PC-9 (cell line): ENCODE measurements at regions of chr6 and their contacts with region 1.

Region 1: DNA sequence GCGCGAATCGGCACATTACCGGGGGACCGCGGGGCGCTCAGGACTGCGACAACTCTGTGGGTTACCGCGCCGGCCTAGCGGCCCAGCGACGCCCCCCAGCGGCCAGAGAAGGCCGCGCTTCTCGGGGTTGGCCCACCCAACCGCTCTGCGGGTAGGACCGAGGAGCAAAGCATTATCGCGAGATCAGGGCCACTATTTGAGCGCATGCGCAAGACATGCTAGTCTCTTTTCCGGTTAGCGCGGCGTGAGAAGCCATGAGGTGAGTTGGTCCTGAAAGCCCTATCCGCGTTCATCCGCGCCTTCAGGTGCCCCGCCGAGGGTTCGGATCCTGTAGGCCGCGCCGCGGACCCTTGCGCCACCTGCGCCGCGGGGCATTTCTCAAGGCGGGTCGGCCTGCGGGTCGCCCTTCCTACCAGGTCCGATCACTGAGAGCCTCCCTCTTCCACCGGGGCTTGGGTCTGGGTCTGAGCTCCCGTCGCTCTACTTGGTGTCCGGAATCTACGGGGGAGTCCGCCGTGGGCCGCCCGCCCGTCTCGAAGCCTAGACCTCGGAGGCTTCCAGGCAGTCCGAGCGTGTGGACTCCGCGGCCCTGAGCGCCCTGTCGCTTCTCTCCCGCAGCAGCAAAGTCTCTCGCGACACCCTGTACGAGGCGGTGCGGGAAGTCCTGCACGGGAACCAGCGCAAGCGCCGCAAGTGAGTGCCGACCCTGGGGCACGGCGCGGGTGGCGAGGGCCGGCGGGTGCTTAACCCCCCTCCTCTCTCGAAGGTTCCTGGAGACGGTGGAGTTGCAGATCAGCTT is at the start of gene RPL10A:
- DNase-seq: peak; percentile 88 to 91
- H3K4me3 ChIP-seq: peak within 1 kb of the TSS; percentile 94
- H3K27ac ChIP-seq: peak within 1 kb of the TSS; percentile 96
- H3K4me1 ChIP-seq: peaks cover 28% of the 10 kb centered on the region
- H3K27me3 ChIP-seq: no peaks in the 10 kb centered on the region
- CTCF ChIP-seq: peak; percentile 93
- total RNA-seq, gene RPL10A: 1,335 and 1,742 TPM in 2 replicates

Region 2: GRCh38 chr6:35297601-35298481 is 170.5 kb before region 1 on chr6 and contains the start of gene DEF6:
- CTCF ChIA-PET with region 1: interaction called, 4 read pairs
- POLR2A ChIA-PET with region 1: interaction called, 5 read pairs
- intact Hi-C with region 1: loop called (anchors 1 kb)
- DNase-seq: peak; percentile 87
- H3K4me3 ChIP-seq: peak within 1 kb of the TSS; percentile 66
- H3K27ac ChIP-seq: no peak within 1 kb of the TSS
- H3K4me1 ChIP-seq: peaks cover 23% of the 10 kb centered on the region
- H3K27me3 ChIP-seq: no peaks in the 10 kb centered on the region
- CTCF ChIP-seq: peak; percentile 85
- total RNA-seq, gene DEF6: 19.6 and 27.0 TPM in 2 replicates

Region 3: DNA sequence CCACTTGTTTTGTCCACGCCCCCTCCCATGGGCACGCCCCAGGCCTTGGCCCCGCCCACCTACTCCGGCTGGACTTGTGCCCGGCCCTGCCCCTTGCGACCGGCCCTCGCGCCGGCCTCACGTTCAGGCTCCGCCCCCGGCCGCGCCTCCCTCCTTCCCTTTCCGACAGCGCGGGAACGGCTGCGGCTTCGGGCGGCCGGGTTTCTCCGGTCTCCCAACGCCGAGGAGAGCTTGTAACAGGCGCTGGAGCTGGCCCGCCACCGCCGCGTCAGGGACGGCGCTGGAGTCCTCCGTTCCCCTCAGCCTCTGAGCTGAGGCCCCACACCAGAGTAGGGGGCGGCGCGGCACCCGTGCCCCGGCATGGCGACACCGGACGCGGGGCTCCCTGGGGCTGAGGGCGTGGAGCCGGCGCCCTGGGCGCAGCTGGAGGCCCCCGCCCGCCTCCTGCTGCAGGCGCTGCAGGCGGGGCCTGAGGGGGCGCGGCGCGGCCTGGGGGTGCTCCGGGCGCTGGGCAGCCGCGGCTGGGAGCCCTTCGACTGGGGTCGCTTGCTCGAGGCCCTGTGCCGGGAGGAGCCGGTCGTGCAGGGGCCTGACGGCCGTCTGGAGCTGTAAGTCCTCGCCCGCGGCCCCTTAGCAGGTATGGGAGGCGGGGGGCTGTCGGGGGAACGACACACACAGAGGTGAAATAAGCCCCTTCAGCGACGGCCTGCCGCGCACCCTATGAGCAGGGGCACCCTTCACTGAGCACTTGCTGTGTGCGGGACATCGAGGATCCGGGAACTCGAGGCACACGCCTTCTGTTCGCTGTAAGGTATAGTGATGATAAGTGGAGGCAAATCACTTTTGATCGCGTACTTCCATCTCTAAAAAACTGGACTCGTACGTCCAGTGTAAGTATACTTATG is 15.9 kb before region 1 on chr6 and contains the start of gene FANCE:
- CTCF ChIA-PET with region 1: interaction called, 19 read pairs
- POLR2A ChIA-PET with region 1: interaction called, 4 read pairs
- intact Hi-C with region 1: loop called (anchors 1 kb)
- DNase-seq: peak; percentile 76 to 97
- H3K4me3 ChIP-seq: peak within 1 kb of the TSS; percentile 65
- H3K27ac ChIP-seq: no peak within 1 kb of the TSS
- H3K4me1 ChIP-seq: peaks cover 21% of the 10 kb centered on the region
- H3K27me3 ChIP-seq: no peaks in the 10 kb centered on the region
- CTCF ChIP-seq: no peak
- total RNA-seq, gene FANCE: 6.9 and 9.6 TPM in 2 replicates

Region 4: GRCh38 chr6:35489995-35490733 is 21.8 kb after region 1 on chr6:
- CTCF ChIA-PET with region 1: no interaction called
- POLR2A ChIA-PET with region 1: interaction called, 3 read pairs
- intact Hi-C with region 1: loop called (anchors 2 kb)
- DNase-seq: no peak
- H3K4me3 ChIP-seq: no peak overlapping the region
- H3K27ac ChIP-seq: no peak overlapping the region
- H3K4me1 ChIP-seq: peaks cover 67% of the 10 kb centered on the region
- H3K27me3 ChIP-seq: no peaks in the 10 kb centered on the region
- CTCF ChIP-seq: no peak

Region 5: GRCh38 chr6:35496841-35497570 is 28.6 kb after region 1 on chr6 and contains the start of gene TEAD3:
- CTCF ChIA-PET with region 1: interaction called, 11 read pairs
- POLR2A ChIA-PET with region 1: interaction called, 7 read pairs
- intact Hi-C with region 1: loop called (anchors 2 kb)
- DNase-seq: peak; percentile 51 to 91
- H3K4me3 ChIP-seq: peak within 1 kb of the TSS; percentile 94
- H3K27ac ChIP-seq: peak within 1 kb of the TSS; percentile 88
- H3K4me1 ChIP-seq: peaks cover 30% of the 10 kb centered on the region
- H3K27me3 ChIP-seq: no peaks in the 10 kb centered on the region
- CTCF ChIP-seq: no peak
- total RNA-seq, gene TEAD3: 33.1 and 40.1 TPM in 2 replicates

Region 6: GRCh38 chr6:35810971-35811497 is 342.7 kb after region 1 on chr6:
- CTCF ChIA-PET with region 1: no interaction called
- POLR2A ChIA-PET with region 1: no interaction called
- intact Hi-C with region 1: no loop called
- DNase-seq: peak; percentile 55 to 99
- H3K4me3 ChIP-seq: no peak overlapping the region; the same call in 1 of the 2 replicates
- H3K27ac ChIP-seq: peak overlapping the region; percentile 66
- H3K4me1 ChIP-seq: peaks cover 22% of the 10 kb centered on the region
- H3K27me3 ChIP-seq: no peaks in the 10 kb centered on the region
- CTCF ChIP-seq: no peak

Region 7: DNA sequence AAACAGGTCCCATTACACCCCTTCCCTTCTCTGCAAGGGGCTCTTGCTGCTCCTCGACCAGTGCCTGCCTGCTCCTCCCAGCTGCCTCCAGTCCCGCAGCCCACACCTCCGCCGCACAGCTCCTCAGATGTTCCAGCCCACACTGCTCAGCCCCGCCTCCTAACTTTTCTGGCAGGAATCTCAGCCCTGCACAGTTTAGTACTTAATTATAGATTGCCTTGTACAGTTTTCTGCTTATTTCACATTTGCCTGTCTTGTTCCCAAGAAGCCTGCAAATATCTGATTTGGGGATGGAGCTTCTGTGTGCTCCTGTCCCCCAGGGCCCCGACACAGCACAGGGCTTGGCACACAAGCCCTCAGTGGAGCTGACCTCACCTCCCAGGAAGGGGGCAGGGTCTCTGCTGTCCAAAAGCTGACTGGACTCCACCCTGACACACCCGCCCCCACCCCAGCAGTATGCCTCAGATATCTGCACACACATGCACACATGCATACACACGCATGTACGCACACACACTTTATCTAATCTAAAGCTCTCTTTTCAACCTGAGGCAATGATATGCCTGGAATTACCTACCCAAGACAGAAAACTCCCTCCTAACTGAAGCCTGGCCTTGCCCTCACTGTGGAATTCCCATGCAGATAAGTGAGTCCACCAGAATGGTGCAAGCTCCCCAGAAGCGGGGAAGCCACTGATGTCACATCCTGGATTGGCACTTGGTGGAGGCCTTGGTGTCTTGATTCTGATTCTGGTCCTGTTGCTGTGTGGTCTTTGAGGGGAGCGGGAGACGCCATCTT is 800.3 kb after region 1 on chr6:
- CTCF ChIA-PET with region 1: no interaction called
- POLR2A ChIA-PET with region 1: interaction called, 25 read pairs
- intact Hi-C with region 1: no loop called
- DNase-seq: no peak
- H3K4me3 ChIP-seq: no peak overlapping the region
- H3K27ac ChIP-seq: no peak overlapping the region
- H3K4me1 ChIP-seq: peaks cover 32% of the 10 kb centered on the region
- H3K27me3 ChIP-seq: no peaks in the 10 kb centered on the region
- CTCF ChIP-seq: no peak